ENCODE measurements at regions of chr7 and their contacts with region 1.

Region 1: DNA sequence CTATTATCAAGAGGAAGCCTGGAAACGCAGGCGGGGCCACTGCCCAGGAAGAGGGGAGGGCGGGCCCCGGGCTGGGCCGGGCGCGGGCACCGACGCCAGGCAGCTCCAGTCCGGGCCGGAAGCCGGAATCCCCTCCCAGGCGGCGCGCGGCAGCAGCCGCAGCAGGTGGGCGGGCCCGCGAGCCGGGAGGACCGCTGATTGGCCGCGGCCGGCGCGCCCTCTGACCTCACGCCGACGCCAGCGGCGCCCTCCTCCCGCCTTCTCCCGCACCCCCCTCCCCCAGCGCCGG is 438 bp downstream of the BCL7B start:
- DNase-seq: no peak
- ATAC-seq: peak; percentile 89
- H3K4me3 ChIP-seq: peak overlapping the region; percentile 69 to 86 (median 82)
- H3K4me3 Mint-ChIP-seq: peak overlapping the region; percentile 92
- H3K27ac ChIP-seq: peak overlapping the region; percentile 92 to 99
- H3K27ac Mint-ChIP-seq: peak overlapping the region; percentile 93
- H3K4me1 ChIP-seq: peaks cover 14 to 21% of the 10 kb centered on the region in 2 donors
- H3K4me1 Mint-ChIP-seq: peaks cover 30% of the 10 kb centered on the region
- H3K27me3 ChIP-seq: no peaks in the 10 kb centered on the region
- H3K27me3 Mint-ChIP-seq: no peaks in the 10 kb centered on the region
- CTCF ChIP-seq: no peak

Region 2: DNA sequence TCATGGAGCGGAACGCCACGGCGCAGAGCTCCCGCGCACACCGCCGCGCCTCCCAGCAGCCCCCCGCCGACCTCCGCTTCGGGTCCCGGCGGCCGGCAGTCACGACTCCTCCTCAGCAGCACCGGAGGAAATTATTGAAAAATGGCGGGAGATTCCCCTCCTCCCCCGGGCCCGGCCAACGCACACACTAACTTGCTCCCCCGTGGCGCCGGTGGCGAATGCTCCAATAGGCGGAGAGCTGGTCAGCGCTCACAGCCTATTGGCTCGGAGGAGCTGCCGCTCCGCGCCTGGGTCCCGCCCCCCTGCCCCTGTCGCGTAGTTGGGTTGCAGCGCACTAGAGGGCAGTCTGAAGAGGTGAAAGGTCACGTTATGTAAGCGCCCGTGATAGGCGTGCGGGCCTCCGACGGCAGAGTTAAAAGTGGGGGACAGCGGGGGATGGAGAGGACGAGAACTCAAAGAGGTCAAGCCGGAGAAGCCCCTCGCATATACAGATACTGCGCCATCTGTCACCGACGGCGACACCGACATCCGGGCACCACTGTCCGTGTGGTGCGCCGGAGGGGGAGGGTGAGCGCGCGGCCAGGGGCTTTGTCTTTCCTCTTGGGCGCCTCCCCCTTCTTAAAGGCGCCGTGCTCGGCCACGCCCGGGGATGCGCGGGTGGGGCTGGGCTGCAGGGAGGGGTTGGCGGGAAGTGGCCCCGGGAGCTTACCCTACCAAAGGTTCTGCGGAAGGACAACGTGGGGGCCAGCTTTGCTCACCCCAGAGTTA is 34.8 kb before region 1 on chr7 and contains the start of gene BAZ1B:
- CTCF ChIA-PET with region 1: interaction called, 3 read pairs
- POLR2A ChIA-PET with region 1: interaction called, 9 read pairs
- intact Hi-C with region 1: loop called (anchors 1 kb)
- DNase-seq: peak; percentile 98
- ATAC-seq: peak; percentile 91
- H3K4me3 ChIP-seq: peak within 1 kb of the TSS; percentile 50 to 78 (median 68)
- H3K4me3 Mint-ChIP-seq: peak within 1 kb of the TSS; percentile 95
- H3K27ac ChIP-seq: peak within 1 kb of the TSS; percentile 82 to 87
- H3K27ac Mint-ChIP-seq: peak within 1 kb of the TSS; percentile 98
- H3K4me1 ChIP-seq: peaks cover 58 to 63% of the 10 kb centered on the region in 2 donors
- H3K4me1 Mint-ChIP-seq: peaks cover 60% of the 10 kb centered on the region
- H3K27me3 ChIP-seq: no peaks in the 10 kb centered on the region
- H3K27me3 Mint-ChIP-seq: no peaks in the 10 kb centered on the region
- CTCF ChIP-seq: no peak
- total RNA-seq, gene BAZ1B: 67.0 and 68.1 TPM in 2 replicates

Region 3: DNA sequence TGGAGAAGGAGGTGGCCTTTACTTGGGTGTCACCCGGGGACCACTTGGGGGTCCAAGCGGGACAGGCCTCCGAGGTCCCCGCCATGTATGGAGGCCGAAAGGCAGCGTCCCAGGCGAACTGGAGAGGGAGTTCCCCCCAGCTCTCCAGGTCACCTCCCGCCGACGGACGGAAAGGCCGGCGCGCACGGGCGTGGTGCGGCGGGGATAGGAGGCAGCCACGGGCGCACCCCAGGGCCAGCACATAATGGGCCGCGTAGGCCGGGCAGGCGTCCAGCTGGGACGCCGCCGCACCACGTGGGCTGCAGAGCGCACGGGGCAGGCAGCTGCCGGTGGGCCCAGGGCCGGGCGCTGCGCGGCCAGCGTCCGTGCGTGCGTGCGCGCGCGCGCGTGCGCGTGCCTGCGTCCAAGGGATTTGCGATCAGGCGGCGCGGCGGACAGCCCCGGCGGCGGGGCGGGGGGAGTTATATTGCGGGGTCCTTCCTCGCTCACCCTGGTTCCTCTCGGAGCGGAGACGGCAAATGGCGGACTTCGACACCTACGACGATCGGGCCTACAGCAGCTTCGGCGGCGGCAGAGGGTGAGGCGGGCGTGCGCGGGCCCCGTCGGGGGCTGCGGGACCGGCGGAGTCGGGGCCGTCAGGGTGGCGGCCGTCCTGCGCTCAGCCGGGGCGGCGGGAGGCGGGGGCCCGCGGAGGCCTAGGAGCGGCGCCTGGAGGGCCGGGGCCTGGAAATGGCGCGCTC is 617.0 kb after region 1 on chr7 and contains the start of gene EIF4H:
- CTCF ChIA-PET with region 1: no interaction called
- POLR2A ChIA-PET with region 1: no interaction called
- intact Hi-C with region 1: loop called (anchors 2 kb)
- DNase-seq: peak; percentile 98
- ATAC-seq: peak; percentile 84
- H3K4me3 ChIP-seq: peak within 1 kb of the TSS; percentile 67 to 93 (median 84)
- H3K4me3 Mint-ChIP-seq: peak within 1 kb of the TSS; percentile 95
- H3K27ac ChIP-seq: peak within 1 kb of the TSS; percentile 88 to 94
- H3K27ac Mint-ChIP-seq: peak within 1 kb of the TSS; percentile 98
- H3K4me1 ChIP-seq: peaks cover 44 to 52% of the 10 kb centered on the region in 2 donors
- H3K4me1 Mint-ChIP-seq: peaks cover 42% of the 10 kb centered on the region
- H3K27me3 ChIP-seq: no peaks in the 10 kb centered on the region
- H3K27me3 Mint-ChIP-seq: no peaks in the 10 kb centered on the region
- CTCF ChIP-seq: no peak
- total RNA-seq, gene EIF4H: 180 and 199 TPM in 2 replicates